Activated CD4-positive, alpha-beta T cell treated with anti-CD3 and anti-CD28 coated beads for 36 hours (primary cell): ENCODE measurements at regions of chr19 and their contacts with region 1.

Region 1: DNA sequence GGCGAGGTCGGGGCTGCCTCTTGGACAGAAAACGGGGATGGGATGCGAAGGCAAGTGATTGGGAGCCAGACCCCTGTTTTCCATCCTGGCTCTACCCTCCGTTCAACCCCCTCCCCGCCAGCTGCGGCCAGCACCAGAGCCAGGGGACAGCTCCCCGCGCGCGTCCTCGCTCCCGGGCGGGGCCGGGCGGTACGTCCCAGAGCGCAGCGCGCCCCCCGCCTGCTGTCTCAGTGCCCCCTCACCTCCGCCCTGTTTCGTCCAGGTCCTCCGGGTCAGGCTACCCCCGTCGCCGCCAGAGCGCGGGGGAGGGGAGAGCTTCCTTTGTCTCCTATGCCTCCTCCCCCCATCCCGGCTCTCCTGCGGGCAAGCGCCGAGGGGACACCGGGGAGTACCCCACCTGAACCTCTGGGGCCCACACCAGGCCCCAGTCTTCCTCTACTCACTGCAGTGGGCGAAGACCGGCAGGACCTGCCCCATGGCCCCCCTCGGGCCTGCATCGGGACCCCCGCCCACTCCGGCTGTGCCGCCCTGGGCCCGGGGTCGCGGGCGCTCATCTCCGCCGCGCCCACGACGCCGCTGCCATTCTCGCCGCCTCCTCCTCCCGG is 396 bp downstream of the RTN2 start:
- DNase-seq: peak; percentile 74
- ATAC-seq: peak; percentile 1
- H3K4me3 Mint-ChIP-seq: peak overlapping the region; percentile 6
- H3K27ac Mint-ChIP-seq: no peak overlapping the region
- H3K4me1 Mint-ChIP-seq: peaks cover 43% of the 10 kb centered on the region
- H3K27me3 Mint-ChIP-seq: peaks cover 31% of the 10 kb centered on the region

Region 2: GRCh38 chr19:45478454-45479238 is 17.8 kb before region 1 on chr19:
- CTCF ChIA-PET with region 1: interaction called, 33 read pairs
- POLR2A ChIA-PET with region 1: interaction called, 3 read pairs
- intact Hi-C with region 1: no loop called
- DNase-seq: peak; percentile 95
- ATAC-seq: peak; percentile 86
- H3K4me3 Mint-ChIP-seq: peak overlapping the region; percentile 60
- H3K27ac Mint-ChIP-seq: peak overlapping the region; percentile 73
- H3K4me1 Mint-ChIP-seq: peaks cover 24% of the 10 kb centered on the region
- H3K27me3 Mint-ChIP-seq: peaks cover 4% of the 10 kb centered on the region

Region 3: DNA sequence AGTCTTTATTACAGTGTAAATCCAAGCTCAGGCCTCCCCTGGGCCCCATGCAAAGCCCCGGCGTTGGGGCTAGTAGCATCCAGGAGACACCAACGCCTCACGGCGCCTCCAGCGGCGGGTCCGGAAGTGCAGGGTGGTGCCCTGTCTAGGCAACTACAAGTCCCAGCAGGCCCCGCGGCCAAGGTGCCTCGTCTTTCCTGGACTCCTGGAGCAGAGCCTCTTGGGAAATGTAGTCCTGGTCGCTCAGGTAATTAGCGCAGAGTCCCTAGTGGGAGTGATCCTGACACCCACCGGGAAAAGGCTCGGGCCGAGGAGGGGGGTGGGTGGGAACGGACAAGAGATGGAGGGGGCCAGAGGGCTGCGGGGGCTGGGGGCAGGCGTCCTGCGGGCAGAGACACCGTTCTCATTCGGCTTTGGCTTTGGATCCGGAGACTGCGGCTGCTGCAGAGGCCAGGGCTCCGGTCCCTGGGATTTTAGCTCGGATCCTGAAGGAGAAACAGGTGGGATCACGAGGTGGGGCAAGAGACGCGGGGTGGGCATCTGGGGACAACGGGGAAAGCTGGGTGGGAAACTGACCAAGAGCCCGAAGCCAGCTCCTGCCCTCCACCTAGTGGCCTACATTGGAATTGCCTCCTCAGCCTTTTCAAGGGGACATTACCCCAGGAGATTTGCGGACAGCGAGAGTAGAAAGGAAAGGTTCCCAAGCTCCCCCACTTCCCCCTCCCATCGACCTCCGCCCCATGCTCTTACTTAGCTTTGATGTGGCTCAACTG is 11.0 kb before region 1 on chr19:
- CTCF ChIA-PET with region 1: interaction called, 33 read pairs
- POLR2A ChIA-PET with region 1: interaction called, 4 read pairs
- intact Hi-C with region 1: no loop called
- DNase-seq: peak; percentile 100
- ATAC-seq: peak; percentile 99
- H3K4me3 Mint-ChIP-seq: peak overlapping the region; percentile 83
- H3K27ac Mint-ChIP-seq: peak overlapping the region; percentile 91
- H3K4me1 Mint-ChIP-seq: peaks cover 13% of the 10 kb centered on the region
- H3K27me3 Mint-ChIP-seq: peaks cover 2% of the 10 kb centered on the region

Region 4: DNA sequence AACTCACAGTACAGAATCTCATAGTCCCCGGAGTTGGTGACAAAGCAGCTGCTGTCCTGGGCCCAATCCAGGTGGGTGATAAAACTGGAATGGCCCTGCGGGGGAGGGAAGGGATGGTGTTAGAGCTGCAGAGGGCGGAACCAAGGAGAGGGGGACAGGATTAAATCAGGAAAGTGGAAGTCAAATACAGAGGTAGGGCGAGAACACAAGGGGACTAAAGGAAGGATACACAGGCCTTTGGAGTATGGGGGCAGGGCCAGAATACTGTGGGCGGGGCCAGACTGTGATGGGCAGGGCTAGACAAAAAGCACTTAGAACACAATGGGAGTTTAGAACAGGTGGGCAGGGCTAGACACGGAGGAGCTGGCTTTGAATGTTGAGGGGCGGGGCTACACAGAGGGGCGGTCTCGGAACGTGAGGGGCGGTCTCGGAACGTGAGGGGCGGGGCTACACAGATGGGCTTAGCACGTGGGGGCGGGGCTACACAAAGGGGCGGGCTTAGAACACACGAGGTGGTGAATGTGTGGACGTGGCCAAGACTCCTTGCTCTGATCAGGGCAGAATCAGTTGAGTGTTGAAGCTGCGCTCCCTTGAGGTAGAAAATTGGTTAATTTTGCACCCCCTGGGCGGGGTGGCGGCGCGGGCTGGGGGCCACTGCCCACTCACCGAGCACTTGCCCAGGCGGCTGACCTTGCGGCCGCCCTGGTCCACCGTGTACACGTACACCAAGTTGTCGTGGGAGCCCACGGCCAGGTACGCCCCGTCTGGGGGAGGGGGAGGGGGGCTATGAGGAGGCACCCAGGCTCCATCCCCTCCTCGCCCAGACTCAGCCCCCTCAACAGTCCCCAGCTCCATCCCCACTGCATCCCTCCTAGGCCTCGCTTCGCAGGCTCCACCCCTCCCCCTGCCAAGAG is 119.6 kb after region 1 on chr19:
- CTCF ChIA-PET with region 1: no interaction called
- POLR2A ChIA-PET with region 1: no interaction called
- intact Hi-C with region 1: loop called in 1 of 2 experiments (anchors 1 kb)
- DNase-seq: peak; percentile 95
- ATAC-seq: peak; percentile 86
- H3K4me3 Mint-ChIP-seq: no peak overlapping the region
- H3K27ac Mint-ChIP-seq: peak overlapping the region; percentile 65
- H3K4me1 Mint-ChIP-seq: peaks cover 24% of the 10 kb centered on the region
- H3K27me3 Mint-ChIP-seq: no peaks in the 10 kb centered on the region